ENCODE measurements at regions of chr9 and their contacts with region 1.

Region 1: GRCh38 chr9:112379177-112380101 is 469 bp upstream of the HSDL2 start:
- DNase-seq: peak; percentile 94 to 100 (median 99)

Region 2: DNA sequence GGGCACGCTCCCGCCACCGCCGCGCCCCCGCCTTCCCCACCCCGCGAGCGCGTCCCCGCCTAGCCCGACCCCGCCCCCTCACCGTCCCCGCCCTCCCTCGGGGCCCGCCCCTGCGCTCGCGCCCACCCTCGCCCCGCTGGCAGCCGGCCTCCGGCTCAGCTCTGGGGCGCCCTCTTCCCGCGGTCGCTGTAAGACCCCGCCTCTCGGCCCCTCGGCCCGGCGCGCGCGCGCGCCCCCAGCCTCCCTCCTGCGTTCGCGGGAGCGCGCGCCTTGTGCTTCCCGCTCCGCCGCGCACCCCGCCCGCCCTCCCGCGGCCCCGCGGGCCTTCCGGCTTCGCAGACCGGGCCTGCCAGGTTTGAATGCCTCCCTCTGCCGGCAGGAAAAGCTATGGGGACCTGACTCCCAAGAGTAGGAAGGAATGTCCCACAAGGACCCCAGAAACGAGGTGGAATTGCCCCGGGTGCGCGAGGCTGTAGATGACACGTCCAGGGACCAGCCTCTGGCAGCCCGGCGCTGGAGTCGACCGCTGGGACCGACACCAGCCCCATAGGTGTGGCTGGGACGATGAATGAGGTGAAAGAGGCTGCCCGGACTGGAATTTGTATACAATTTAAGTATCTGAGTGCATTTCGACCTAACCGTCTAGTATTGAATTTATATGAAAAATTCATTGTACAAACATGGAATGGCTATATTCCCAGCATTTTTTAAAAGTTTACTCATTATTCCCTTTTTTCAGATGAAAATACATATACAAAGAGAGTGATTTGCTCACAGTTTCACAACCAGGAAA is 45.6 kb before region 1 on chr9:
- intact Hi-C with region 1: loop called (anchors 2 kb)
- DNase-seq: peak in 41 of 42 donors; percentile 70 to 97 (median 93)

Region 3: DNA sequence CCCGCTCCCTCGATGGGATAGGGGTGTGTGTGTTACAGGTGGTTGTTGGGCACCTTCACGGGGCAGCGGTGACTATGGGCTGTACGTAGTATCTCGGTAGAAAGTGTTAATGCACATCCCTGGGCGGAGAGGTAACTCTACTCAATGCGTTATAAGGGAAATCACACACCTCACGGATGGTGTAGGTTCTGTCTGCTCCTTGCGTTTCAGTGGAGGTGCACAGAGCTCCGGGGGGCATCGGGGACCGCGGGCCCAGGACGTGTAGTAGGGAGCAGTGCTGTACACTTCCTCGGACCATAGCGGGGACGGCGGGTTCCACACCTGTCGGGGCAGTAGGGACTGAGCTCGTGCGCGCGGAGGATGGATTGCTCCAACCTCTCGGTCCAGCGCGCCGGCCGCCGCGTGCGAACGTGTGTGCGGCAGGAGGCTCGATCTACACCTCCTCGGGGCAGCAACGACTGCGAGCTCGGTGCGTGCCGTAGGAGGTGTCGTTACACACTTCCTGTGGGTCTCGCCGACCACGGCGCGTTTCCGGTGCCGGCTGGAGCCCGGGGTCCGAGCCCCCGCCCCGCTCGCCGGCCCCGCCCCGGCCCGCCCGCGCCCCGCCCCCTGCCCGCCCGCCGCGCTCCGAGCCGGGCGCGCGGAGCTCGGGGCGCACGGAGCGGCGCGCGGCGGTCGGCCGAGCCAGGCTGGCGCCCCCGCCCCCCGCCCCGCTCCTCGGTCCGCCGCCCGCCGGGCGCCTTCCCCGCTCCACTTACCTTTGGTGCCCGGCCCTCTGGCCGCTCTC is 107.0 kb after region 1 on chr9 and contains the start of gene KIAA1958:
- intact Hi-C with region 1: loop called (anchors 10 kb)
- DNase-seq: peak; percentile 26 to 89 (median 78)

Region 4: GRCh38 chr9:112774006-112774996 is 394.9 kb after region 1 on chr9:
- intact Hi-C with region 1: no loop called
- DNase-seq: peak in 1 of 42 donors; percentile 4

Measured in head of caudate nucleus (tissue), 42 donors.